ENCODE measurements at regions of chr6 and their contacts with region 1.

Region 1: GRCh38 chr6:28940858-28941680 is 17.3 kb upstream of the TRIM27 start:
- DNase-seq: peak; percentile 87
- ATAC-seq: peak; percentile 72
- H3K4me3 Mint-ChIP-seq: peak overlapping the region; percentile 79
- H3K27ac Mint-ChIP-seq: peak overlapping the region; percentile 96
- H3K4me1 Mint-ChIP-seq: peaks cover 39% of the 10 kb centered on the region
- H3K27me3 Mint-ChIP-seq: no peaks in the 10 kb centered on the region

Region 2: GRCh38 chr6:27479319-27480182 is 1461.5 kb before region 1 on chr6:
- CTCF ChIA-PET with region 1: no interaction called
- POLR2A ChIA-PET with region 1: no interaction called
- intact Hi-C with region 1: loop called (anchors 5 kb)
- DNase-seq: peak; percentile 89
- ATAC-seq: peak; percentile 69
- H3K4me3 Mint-ChIP-seq: no peak overlapping the region
- H3K27ac Mint-ChIP-seq: no peak overlapping the region
- H3K4me1 Mint-ChIP-seq: peaks cover 6% of the 10 kb centered on the region
- H3K27me3 Mint-ChIP-seq: no peaks in the 10 kb centered on the region

Region 3: DNA sequence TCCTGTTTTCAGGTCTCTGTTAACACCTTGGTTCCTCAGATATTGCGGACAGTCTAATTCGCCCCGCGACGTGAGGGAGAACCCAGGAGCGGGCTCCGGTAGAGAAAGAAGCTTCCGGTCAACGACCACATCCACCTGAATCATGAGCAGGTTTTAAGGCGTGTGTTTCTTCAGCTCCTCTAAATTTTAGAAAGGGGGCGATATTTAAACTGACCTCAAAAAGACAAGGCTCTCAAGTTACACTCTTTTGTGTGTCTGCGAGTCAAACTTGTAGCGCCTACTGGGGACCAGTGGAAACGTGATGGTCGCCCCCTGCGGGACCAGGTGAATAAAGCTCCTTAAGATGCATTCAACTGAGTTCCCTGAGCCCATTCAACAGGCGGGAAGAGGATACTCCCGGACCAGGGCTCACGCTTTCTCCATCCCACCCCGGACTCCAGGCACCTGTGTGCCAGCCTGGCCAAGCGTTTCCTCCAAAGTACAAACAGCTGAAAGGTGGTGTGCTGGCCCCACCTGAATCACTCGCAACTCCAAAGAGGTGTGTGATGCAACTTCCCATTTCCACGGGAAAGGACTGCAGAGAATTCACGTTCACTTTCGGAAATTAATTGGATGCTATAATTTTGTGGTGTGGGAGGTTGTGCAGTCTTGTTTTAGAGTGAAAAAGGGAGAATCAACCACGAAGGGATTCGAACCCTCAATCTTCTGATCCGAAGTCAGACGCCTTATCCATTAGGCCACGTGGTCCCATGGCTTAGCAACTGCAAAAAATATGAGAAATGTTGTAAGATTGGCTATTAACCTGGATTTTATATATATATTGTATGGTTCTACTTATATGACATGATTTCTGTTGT is 398.4 kb before region 1 on chr6:
- CTCF ChIA-PET with region 1: no interaction called
- POLR2A ChIA-PET with region 1: no interaction called
- intact Hi-C with region 1: loop called in 1 of 2 experiments (anchors 1 kb)
- DNase-seq: peak; percentile 80
- ATAC-seq: peak; percentile 62
- H3K4me3 Mint-ChIP-seq: peak overlapping the region; percentile 72
- H3K27ac Mint-ChIP-seq: peak overlapping the region; percentile 75
- H3K4me1 Mint-ChIP-seq: peaks cover 36% of the 10 kb centered on the region
- H3K27me3 Mint-ChIP-seq: peaks cover 38% of the 10 kb centered on the region

Region 4: DNA sequence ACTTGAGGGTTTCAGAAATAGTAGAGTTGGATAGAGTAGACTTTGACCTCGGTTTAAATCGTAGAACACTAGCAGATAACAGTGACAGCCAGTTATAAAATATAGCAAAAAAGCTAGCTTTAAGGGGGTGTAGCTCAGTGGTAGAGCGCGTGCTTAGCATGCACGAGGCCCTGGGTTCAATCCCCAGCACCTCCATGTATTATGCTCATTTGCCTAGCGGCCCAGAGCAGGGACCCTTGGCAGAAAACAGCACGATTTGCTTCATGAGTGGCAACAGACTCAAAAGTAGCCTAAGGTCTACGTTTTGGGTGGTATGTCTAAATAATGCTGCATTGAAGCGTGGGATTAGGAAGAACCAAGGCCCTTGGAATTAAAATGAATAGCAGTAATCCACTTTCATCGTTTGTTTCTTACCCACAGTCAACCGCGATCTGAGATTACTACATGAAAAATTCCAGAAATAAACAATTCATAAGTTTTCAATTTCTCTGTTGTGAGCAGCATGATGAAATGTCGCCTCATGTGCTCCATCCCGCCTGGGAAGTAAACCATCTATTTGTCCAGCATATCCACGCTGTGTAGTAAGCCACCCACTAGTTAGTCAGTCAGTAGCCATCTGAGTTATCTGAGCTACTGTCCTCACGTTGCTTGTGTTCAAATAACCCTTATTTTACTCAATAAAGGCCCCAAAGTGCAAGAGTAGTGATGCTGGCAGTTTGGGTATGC is 230.4 kb before region 1 on chr6:
- CTCF ChIA-PET with region 1: no interaction called
- POLR2A ChIA-PET with region 1: no interaction called
- intact Hi-C with region 1: loop called in 1 of 2 experiments (anchors 5 kb)
- DNase-seq: peak; percentile 59
- ATAC-seq: peak; percentile 45
- H3K4me3 Mint-ChIP-seq: peak overlapping the region; percentile 47
- H3K27ac Mint-ChIP-seq: no peak overlapping the region
- H3K4me1 Mint-ChIP-seq: peaks cover 4% of the 10 kb centered on the region
- H3K27me3 Mint-ChIP-seq: peaks cover 54% of the 10 kb centered on the region

Region 5: GRCh38 chr6:28863604-28864320 is 77.3 kb before region 1 on chr6:
- CTCF ChIA-PET with region 1: interaction called, 4 read pairs
- POLR2A ChIA-PET with region 1: no interaction called
- intact Hi-C with region 1: loop called (anchors 1 to 2 kb)
- DNase-seq: peak; percentile 88
- ATAC-seq: peak; percentile 45
- H3K4me3 Mint-ChIP-seq: peak overlapping the region; percentile 74
- H3K27ac Mint-ChIP-seq: peak overlapping the region; percentile 78
- H3K4me1 Mint-ChIP-seq: peaks cover 36% of the 10 kb centered on the region
- H3K27me3 Mint-ChIP-seq: peaks cover 1% of the 10 kb centered on the region

Region 6: DNA sequence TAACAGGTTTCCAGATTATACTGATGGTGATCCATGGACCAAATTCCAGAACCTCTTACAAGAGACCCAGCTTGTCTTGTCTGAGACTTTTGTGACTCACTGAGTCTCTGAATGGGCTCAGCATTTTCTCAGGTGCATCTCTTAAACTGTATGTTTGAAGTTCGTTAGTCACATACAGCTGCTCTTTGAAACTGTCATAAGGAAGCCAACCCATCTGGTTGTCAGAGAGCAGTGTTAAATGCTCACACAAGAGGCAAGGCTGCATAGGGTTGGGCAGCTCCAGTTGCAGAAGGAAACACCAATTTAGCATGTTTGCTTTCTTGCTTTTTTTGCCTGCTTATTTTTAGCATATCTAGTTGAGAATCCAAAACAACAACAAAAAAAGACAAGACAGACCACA is 64.4 kb before region 1 on chr6:
- CTCF ChIA-PET with region 1: no interaction called
- POLR2A ChIA-PET with region 1: no interaction called
- intact Hi-C with region 1: no loop called
- DNase-seq: no peak
- ATAC-seq: peak; percentile 77
- H3K4me3 Mint-ChIP-seq: no peak overlapping the region
- H3K27ac Mint-ChIP-seq: no peak overlapping the region
- H3K4me1 Mint-ChIP-seq: peaks cover 8% of the 10 kb centered on the region
- H3K27me3 Mint-ChIP-seq: peaks cover 3% of the 10 kb centered on the region

Region 7: GRCh38 chr6:28953039-28953584 is 12.0 kb after region 1 on chr6:
- CTCF ChIA-PET with region 1: no interaction called
- POLR2A ChIA-PET with region 1: no interaction called
- intact Hi-C with region 1: loop called (anchors 1 kb)
- DNase-seq: peak; percentile 78
- ATAC-seq: peak; percentile 80
- H3K4me3 Mint-ChIP-seq: peak overlapping the region; percentile 81
- H3K27ac Mint-ChIP-seq: peak overlapping the region; percentile 52
- H3K4me1 Mint-ChIP-seq: peaks cover 14% of the 10 kb centered on the region
- H3K27me3 Mint-ChIP-seq: peaks cover 4% of the 10 kb centered on the region

Measured in activated CD4-positive, alpha-beta T cell treated with anti-CD3 and anti-CD28 coated beads for 36 hours (primary cell).